Ascending aorta (tissue), 2 donors: ENCODE measurements at regions of chr7 and their contacts with region 1.

Region 1: GRCh38 chr7:157273208-157274093 is 63.4 kb upstream of the DNAJB6 start:
- DNase-seq: peak in 1 of 2 donors; percentile 87
- H3K4me3 ChIP-seq: peak overlapping the region in 1 of 2 donors; percentile 1
- H3K27ac ChIP-seq: peak overlapping the region; percentile 95 to 98
- H3K4me1 ChIP-seq: peaks cover 21 to 25% of the 10 kb centered on the region in 2 donors
- H3K27me3 ChIP-seq: no peaks in the 10 kb centered on the region
- CTCF ChIP-seq: peak; percentile 93 to 100 (median 99)

Region 2: DNA sequence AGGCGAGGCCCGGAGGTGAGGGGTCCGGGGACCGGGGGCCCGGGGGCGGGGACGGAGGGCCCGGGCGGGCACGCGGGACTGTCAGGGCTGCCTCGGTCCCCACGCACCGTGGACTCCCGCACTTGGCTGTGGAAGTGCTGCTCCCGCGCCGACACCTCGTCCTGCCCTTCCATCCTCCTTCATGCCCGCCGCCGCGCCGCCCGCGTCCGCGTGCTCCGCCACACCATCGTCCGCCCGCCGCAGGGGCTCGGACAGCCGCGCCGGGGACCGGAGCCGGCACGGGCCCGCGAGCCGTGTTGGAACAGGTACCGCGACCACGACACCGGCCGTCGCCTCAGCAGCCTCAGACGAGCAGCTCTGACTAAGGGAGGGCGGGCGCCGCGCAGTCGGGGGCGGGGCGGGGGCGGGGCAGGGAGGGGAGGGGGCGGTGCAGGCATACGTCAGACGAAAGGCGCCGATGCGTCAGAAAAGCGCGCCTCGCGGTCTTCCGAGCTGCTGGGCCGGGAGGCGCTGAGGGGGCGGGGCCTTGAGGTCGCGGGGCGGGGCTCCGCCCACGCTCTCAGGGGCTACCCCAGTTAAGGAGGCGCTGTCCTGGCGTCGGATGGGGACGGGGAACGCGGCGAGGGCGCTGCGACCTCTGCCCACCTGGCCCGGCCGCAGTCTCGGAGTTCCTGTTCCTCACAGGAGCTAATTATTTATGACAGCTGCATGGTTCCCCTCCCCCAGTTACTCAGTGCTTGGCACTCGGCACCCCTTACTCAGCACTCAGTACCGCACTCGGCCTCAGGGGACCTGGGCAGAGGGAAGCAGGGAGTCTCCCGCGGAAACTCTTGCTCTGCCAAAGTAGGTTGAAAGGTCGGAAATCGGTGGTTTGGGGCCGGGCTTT is 380.4 kb before region 1 on chr7 and contains the start of gene LMBR1:
- intact Hi-C with region 1: loop called (anchors 1 kb)
- DNase-seq: peak; percentile 63 to 96
- H3K4me3 ChIP-seq: peak within 1 kb of the TSS; percentile 84 to 94
- H3K27ac ChIP-seq: peak within 1 kb of the TSS; percentile 74 to 90
- H3K4me1 ChIP-seq: peaks cover 0 to 8% of the 10 kb centered on the region in 2 donors
- H3K27me3 ChIP-seq: no peaks in the 10 kb centered on the region
- CTCF ChIP-seq: peak; percentile 55 to 79 (median 60)
- total RNA-seq, gene LMBR1: 14.8 TPM

Region 3: DNA sequence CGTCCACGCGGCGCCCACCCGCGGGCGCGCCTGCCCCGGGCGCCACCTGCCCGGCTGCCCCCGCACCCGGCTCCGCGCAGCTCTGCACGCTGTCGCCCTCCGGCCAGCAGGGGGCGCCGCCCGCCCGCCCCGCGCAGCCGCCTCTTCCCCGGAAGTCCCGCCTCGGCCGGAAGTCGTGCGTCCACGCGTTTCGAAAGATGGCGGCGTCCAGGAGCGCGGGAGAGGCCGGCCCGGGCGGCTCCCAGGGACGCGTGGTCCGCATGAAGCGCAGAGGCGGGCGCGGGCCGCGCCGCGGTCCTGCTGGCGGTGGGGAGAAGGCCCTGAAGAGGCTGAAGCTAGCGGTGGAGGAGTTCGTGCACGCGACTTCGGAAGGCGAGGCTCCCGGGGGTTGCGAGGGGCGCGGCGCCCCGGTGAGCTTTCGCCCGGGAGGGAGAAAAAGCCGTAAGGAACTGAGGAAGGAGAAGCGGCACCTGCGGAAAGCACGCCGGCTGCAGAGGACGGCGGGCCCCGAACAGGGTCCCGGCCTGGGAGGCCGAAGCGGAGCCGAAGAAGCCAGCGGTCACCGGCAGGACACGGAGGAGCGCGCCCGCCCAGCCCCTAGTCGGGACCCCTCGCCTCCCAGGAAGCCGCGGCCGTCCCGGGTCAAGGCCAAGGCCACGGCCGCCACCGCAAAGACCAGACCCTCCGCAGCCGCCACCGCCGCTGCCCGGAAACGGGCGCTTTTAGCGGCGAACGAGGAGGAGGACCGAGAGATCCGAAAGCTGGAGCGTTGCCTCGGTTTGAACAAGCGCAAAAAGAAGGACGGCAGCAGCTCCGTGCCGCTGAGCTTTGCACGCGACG is 323.7 kb before region 1 on chr7 and contains the start of gene NOM1:
- intact Hi-C with region 1: loop called (anchors 5 kb)
- DNase-seq: peak; percentile 31 to 91
- H3K4me3 ChIP-seq: peak within 1 kb of the TSS; percentile 53 to 99
- H3K27ac ChIP-seq: peak within 1 kb of the TSS in 1 of 2 donors; percentile 41
- H3K4me1 ChIP-seq: peaks cover 10 to 23% of the 10 kb centered on the region in 2 donors
- H3K27me3 ChIP-seq: no peaks in the 10 kb centered on the region
- CTCF ChIP-seq: peak; percentile 59 to 93 (median 62)
- total RNA-seq, gene NOM1: 16.1 TPM

Region 4: DNA sequence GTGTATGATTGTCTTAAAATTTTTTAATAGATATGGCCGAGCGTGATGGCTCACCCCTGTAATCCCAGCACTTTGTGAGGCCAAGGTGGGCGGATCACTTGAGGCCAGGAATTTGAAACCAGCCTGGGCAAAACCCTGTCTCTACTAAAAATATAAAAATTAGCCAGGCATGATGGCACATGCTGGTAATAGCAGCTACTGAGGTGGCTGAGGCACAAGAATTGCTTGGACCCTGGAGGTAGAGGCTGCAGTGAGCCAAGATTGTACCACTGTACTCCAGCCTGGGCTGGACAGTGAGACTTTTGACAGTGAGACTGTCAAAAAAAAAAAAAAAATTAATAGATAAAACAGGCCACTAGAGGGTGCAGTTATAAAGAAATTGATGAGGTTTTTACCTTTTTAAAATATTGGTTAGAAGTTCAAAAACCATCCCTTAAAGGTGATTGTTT is 303.5 kb before region 1 on chr7:
- intact Hi-C with region 1: loop called (anchors 2 kb)
- DNase-seq: no peak
- H3K4me3 ChIP-seq: no peak overlapping the region
- H3K27ac ChIP-seq: no peak overlapping the region
- H3K4me1 ChIP-seq: no peaks in the 10 kb centered on the region
- H3K27me3 ChIP-seq: no peaks in the 10 kb centered on the region
- CTCF ChIP-seq: peak in 2 of 3 experiments; percentile 16 to 23

Region 5: GRCh38 chr7:157138424-157139110 is 134.9 kb before region 1 on chr7 and contains the start of gene UBE3C:
- intact Hi-C with region 1: loop called (anchors 2 kb)
- DNase-seq: peak; percentile 35 to 93
- H3K4me3 ChIP-seq: peak within 1 kb of the TSS; percentile 72 to 94
- H3K27ac ChIP-seq: peak within 1 kb of the TSS; percentile 87 to 90
- H3K4me1 ChIP-seq: peaks cover 9 to 16% of the 10 kb centered on the region in 2 donors
- H3K27me3 ChIP-seq: no peaks in the 10 kb centered on the region
- CTCF ChIP-seq: peak in 1 of 3 experiments; percentile 10
- total RNA-seq, gene UBE3C: 31.7 TPM

Region 6: DNA sequence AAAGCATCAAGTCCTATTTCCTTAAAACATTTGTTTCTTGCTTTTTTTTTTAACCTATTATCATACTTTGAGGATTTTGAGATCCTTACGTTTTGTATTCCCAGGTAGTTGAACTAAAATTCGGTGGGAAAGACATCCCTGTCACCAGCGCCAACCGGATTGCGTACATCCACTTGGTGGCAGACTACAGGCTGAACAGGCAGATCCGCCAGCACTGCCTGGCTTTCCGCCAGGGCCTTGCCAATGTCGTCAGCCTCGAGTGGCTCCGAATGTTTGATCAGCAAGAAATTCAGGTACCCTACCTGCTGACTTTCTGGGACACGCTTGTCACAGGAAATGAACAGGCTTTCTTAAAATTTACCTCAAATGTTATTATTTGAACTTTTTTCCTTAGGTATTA is 19.6 kb before region 1 on chr7:
- intact Hi-C with region 1: loop called (anchors 1 kb)
- DNase-seq: peak in 1 of 2 donors; percentile 81
- H3K4me3 ChIP-seq: no peak overlapping the region
- H3K27ac ChIP-seq: no peak overlapping the region
- H3K4me1 ChIP-seq: no peaks in the 10 kb centered on the region
- H3K27me3 ChIP-seq: no peaks in the 10 kb centered on the region
- CTCF ChIP-seq: peak in 2 of 3 experiments; percentile 10 to 25